ENCODE measurements at regions of chr5 and their contacts with region 1.

Region 1: DNA sequence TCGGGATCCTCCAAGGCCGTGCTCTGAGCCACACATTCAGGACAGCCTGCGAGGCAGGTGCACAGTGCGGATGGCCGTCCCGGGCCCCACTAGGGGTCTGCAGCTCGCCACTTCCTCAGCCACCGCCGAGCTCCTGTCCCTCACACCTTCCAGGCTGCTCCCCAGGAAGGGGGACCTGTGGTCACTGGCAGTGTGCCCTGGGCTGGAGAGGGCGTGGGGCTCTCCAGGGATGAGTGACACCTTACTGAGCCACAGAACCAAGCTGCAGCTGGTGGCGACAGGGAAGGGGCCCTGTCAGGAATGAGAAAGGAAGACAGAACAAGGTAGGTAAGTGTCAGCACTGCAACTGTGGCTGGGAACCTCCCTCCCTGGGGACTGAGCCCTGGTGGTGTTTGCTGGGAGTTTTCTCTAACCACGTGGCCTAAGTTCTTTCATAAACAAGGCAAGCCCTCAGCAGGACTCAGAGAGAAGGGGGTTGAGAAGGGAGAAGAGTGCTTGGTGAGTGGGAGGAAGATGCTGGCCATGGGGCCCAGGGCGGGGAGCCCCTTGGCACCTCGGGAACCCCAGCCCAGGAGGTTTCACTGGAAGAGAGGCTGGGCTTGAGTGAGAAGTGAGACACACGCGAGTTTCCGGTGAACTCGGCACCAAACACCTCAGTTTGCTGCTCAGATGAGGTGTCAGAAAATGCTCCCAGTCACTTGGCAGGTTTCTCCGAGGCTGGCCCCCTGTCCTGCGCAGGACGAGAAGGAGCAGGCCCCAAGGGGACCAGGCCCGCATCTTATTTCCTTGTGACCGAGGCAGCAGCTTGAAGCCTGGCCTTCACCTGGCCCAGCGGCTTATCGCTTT is 5.2 kb downstream of the IL13 start:
- DNase-seq: peak in 1 of 2 experiments; percentile 13
- ATAC-seq: peak; percentile 36 to 52; a peak in 5 of 6 replicates
- H3K4me3 ChIP-seq: no peak overlapping the region
- H3K27ac ChIP-seq: no peak overlapping the region
- H3K4me1 ChIP-seq: no peaks in the 10 kb centered on the region
- CTCF ChIP-seq: no peak
- EP300 ChIP-seq: no peak
- POLR2A ChIP-seq: no peak
- RAD21 ChIP-seq: no peak

Region 2: GRCh38 chr5:132050136-132050535 is 613.0 kb before region 1 on chr5:
- CTCF ChIA-PET with region 1: no interaction called
- POLR2A ChIA-PET with region 1: no interaction called
- DNase-seq: no peak
- ATAC-seq: no peak
- H3K4me3 ChIP-seq: no peak overlapping the region
- H3K27ac ChIP-seq: no peak overlapping the region
- H3K4me1 ChIP-seq: no peaks in the 10 kb centered on the region
- CTCF ChIP-seq: no peak
- EP300 ChIP-seq: no peak
- POLR2A ChIP-seq: no peak
- RAD21 ChIP-seq: no peak

Region 3: DNA sequence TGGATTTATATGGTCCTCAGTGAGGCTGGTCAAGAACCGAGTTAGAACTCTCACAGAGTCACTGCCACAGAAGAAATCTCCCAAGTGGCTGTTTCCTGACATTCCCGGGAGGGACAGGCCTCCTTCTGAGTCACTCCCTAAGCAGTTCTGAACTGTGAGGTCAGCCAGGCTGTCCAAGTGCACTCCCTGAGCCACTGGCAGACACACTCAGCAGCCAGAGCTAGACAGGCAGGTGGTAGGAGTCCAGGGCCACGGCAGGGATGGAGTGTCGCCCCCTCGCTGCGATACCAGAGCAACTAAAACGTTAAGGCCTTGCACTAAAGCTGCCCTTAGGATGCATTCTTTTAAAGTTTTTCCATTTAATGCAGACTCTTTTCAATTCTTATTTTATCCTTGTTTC is 14.0 kb after region 1 on chr5:
- CTCF ChIA-PET with region 1: interaction called, 37 read pairs
- POLR2A ChIA-PET with region 1: no interaction called
- DNase-seq: peak; percentile 86 to 97
- ATAC-seq: peak; percentile 97 to 98
- H3K4me3 ChIP-seq: no peak overlapping the region
- H3K27ac ChIP-seq: peak overlapping the region in 1 of 2 experiments; percentile 50; a peak in 2 of 6 replicates
- H3K4me1 ChIP-seq: peaks cover 32% of the 10 kb centered on the region
- CTCF ChIP-seq: peak; percentile 60
- EP300 ChIP-seq: no peak
- POLR2A ChIP-seq: no peak
- RAD21 ChIP-seq: peak; percentile 54 to 55; a peak in 4 of 5 replicates

Region 4: DNA sequence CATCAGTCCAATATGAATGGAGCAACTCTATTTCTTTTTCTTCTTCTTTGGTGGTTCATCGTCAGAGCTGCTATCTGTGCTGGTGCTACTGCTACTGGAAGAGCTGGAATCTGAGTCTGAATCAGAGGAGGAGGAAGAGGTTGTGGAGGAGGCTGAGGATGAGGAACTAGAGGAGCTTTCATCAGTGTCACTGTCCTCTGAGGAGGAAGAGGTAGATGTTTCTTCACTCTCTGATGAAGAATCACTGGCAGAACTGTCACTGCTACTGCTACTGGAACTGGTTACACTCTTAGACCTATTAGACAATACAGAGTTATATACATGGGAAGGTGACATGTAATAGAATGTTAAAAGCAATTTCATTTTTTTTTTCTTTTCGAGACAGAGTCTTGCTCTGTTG is 335.4 kb after region 1 on chr5:
- CTCF ChIA-PET with region 1: no interaction called
- POLR2A ChIA-PET with region 1: no interaction called
- DNase-seq: no peak
- ATAC-seq: no peak
- H3K4me3 ChIP-seq: no peak overlapping the region
- H3K27ac ChIP-seq: no peak overlapping the region
- H3K4me1 ChIP-seq: no peaks in the 10 kb centered on the region
- CTCF ChIP-seq: no peak
- EP300 ChIP-seq: no peak
- POLR2A ChIP-seq: no peak
- RAD21 ChIP-seq: no peak

Measured in A549 (cell line).